Activated naive CD4-positive, alpha-beta T cell treated with anti-CD3 and anti-CD28 coated beads for 36 hours (primary cell): ENCODE measurements at regions of chr1 and their contacts with region 1.

Region 1: GRCh38 chr1:172745014-172745413 is 86.1 kb downstream of the FASLG start:
- DNase-seq: peak; percentile 64
- H3K4me3 Mint-ChIP-seq: no peak overlapping the region
- H3K27ac Mint-ChIP-seq: no peak overlapping the region
- H3K4me1 Mint-ChIP-seq: peaks cover 38% of the 10 kb centered on the region
- H3K27me3 Mint-ChIP-seq: no peaks in the 10 kb centered on the region

Region 2: DNA sequence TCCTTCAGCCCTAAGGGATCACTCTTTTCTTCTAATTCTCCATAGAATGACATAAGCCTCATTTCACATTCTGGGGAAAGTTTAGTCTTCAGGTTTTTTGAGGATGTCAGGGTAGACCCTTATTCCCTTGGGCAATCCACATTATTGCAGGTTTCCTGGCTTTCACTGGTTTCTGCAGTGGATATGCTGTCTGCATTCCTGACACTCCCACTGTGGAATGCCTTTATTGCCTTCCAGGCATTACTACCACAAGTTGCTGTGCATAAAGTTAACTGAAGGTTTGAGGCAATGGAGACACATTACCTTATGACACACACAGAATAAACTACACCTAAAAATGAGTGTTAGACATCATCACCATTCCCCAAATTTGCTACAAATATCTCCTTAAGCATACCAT is 73.4 kb before region 1 on chr1:
- CTCF ChIA-PET with region 1: no interaction called
- intact Hi-C with region 1: no loop called
- DNase-seq: no peak
- H3K4me3 Mint-ChIP-seq: no peak overlapping the region
- H3K27ac Mint-ChIP-seq: no peak overlapping the region
- H3K4me1 Mint-ChIP-seq: peaks cover 70% of the 10 kb centered on the region
- H3K27me3 Mint-ChIP-seq: no peaks in the 10 kb centered on the region

Region 3: DNA sequence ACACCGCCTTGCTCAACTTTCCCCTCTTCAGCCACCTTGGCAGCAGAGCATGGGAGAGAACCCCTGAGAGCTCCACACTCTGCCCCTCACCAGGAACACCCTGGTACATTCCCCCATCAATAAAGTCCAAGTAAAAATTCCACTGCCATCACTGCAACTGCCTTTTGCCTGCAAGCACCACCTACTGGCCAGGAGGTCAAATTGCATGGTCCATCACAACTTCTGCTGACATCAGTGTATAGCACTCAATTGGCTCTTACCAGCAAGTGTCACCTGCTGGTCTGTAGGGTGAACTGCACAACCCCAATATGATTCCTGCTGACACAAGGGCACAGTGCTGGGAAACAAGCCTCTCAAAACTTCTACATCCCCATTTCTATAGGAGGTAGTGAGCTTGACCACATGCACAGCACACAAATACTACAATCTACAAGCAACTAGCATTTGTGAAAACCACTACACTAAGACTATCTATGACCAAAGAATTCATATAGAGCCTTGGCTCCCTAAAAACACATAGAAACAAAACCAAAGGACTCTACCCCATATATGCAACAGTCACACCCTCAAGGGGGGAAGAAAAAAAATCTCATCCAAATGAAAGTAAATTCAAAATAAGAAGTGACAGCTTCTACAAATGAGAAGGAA is 16.9 kb before region 1 on chr1:
- CTCF ChIA-PET with region 1: interaction called, 17 read pairs
- intact Hi-C with region 1: no loop called
- DNase-seq: peak; percentile 71
- H3K4me3 Mint-ChIP-seq: no peak overlapping the region
- H3K27ac Mint-ChIP-seq: no peak overlapping the region
- H3K4me1 Mint-ChIP-seq: peaks cover 17% of the 10 kb centered on the region
- H3K27me3 Mint-ChIP-seq: no peaks in the 10 kb centered on the region

Region 4: DNA sequence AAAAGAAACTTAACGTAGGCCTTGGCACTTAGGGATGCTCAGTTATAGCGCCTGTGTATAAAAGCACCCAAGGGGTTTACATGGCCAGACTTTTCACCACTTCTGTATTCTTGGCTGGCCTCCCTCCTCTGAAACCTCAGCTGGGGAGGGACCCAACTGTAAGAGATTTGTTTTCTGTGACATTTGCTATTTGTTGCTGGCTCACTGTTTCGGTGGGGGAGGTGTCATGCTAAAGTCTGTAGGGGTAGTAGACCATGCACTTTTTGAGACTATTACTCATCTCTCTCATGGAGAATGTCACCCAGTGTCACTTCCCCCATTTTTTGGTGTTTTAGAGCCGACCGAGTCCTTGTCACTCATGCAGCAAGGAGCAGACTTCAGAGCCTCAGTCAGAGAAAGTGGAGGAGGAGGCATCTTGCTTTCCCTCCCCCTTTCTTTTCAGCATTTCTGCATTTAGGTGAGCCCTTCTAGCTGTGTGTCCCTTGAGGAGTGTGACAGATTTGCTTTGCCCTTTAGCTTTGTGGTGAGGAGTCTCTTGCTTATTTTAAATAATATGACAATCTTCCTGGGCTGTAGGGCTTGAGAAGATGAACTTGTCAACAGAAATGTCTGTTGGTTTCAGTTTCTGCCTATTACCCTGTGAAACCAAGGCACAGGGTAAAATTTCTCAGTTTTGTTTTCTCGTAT is 74.0 kb after region 1 on chr1:
- CTCF ChIA-PET with region 1: interaction called, 23 read pairs
- intact Hi-C with region 1: loop called (anchors 1 kb)
- DNase-seq: peak; percentile 68
- H3K4me3 Mint-ChIP-seq: no peak overlapping the region
- H3K27ac Mint-ChIP-seq: no peak overlapping the region
- H3K4me1 Mint-ChIP-seq: peaks cover 25% of the 10 kb centered on the region
- H3K27me3 Mint-ChIP-seq: no peaks in the 10 kb centered on the region

Region 5: DNA sequence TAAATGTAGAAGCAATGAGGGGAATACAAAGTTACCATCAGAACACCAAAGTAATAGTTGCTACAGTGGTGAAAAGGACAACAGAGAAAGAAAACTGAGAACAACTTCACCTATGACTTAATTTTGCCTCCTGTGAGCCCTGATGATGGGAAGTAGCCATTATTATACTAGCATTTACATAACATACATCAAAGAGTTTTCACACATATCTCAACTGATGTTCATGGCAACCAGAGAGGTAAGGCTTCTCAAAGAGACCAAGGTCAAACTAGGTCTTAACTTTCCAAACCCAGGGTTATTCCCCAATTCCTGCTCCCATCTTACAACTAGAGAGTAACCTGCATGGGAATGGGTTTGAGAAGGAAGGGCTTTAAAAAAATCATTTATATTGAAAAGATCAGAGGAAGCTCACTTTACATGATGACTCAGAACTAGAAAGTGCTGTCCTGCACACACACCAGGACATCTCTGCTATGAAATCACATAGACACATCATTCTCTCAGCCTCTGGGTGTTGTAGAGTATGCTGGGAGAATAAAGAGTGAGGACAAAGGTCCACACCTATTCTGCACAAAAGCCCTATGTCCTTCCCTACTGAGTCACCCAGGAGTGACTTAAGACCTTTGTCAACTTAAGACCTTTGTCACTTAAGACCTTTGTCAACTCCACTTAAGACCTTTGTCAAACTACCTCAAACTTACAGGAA is 126.0 kb after region 1 on chr1:
- CTCF ChIA-PET with region 1: interaction called, 3 read pairs
- intact Hi-C with region 1: loop called (anchors 2 kb)
- DNase-seq: no peak
- H3K4me3 Mint-ChIP-seq: no peak overlapping the region
- H3K27ac Mint-ChIP-seq: no peak overlapping the region
- H3K4me1 Mint-ChIP-seq: peaks cover 32% of the 10 kb centered on the region
- H3K27me3 Mint-ChIP-seq: peaks cover 24% of the 10 kb centered on the region

Region 6: DNA sequence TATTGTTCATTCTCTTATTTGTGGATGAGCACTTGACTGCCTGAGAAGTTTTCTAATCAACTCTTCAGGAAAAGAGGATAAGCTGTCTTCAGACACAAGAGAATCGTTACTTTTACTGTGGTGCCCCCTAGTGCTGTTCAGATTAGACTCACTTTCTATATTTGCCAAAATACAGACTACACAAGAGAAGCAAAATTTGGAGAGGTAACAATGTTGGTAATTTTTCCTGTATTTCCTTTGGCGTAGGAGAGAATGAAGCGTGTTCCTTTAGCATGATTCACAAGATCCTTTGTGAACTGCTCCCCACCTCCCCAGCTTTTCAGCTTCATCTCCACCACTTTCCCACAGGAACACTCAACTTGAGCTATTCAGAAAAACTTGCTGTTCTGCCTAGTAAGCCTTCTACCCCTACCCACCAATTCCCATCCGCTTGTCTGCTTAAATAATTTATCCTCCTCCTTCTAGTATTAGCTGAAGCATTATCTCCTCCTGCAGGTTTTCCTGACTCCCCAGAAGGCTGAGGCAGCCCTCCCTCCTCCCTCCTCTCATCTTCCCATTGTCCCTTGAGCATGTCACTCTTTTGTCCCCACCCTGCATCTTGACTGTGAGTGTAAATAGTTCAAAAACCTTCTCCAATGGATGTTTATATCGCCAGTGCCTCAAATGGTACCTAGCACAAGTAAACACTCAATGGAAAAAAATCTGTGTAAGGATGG is 457.6 kb after region 1 on chr1:
- CTCF ChIA-PET with region 1: interaction called, 176 read pairs
- intact Hi-C with region 1: loop called (anchors 1 kb)
- DNase-seq: peak; percentile 39
- H3K4me3 Mint-ChIP-seq: no peak overlapping the region
- H3K27ac Mint-ChIP-seq: no peak overlapping the region
- H3K4me1 Mint-ChIP-seq: peaks cover 37% of the 10 kb centered on the region
- H3K27me3 Mint-ChIP-seq: peaks cover 4% of the 10 kb centered on the region

Region 7: GRCh38 chr1:173429471-173430402 is 684.7 kb after region 1 on chr1:
- CTCF ChIA-PET with region 1: interaction called, 3 read pairs
- intact Hi-C with region 1: loop called (anchors 1 kb)
- DNase-seq: peak; percentile 86
- H3K4me3 Mint-ChIP-seq: peak overlapping the region; percentile 42
- H3K27ac Mint-ChIP-seq: peak overlapping the region; percentile 43
- H3K4me1 Mint-ChIP-seq: peaks cover 16% of the 10 kb centered on the region
- H3K27me3 Mint-ChIP-seq: no peaks in the 10 kb centered on the region

Region 8: GRCh38 chr1:173986951-173987350 is 1241.9 kb after region 1 on chr1:
- CTCF ChIA-PET with region 1: no interaction called
- intact Hi-C with region 1: no loop called
- DNase-seq: no peak
- H3K4me3 Mint-ChIP-seq: no peak overlapping the region
- H3K27ac Mint-ChIP-seq: no peak overlapping the region
- H3K4me1 Mint-ChIP-seq: no peaks in the 10 kb centered on the region
- H3K27me3 Mint-ChIP-seq: no peaks in the 10 kb centered on the region

Region 9: DNA sequence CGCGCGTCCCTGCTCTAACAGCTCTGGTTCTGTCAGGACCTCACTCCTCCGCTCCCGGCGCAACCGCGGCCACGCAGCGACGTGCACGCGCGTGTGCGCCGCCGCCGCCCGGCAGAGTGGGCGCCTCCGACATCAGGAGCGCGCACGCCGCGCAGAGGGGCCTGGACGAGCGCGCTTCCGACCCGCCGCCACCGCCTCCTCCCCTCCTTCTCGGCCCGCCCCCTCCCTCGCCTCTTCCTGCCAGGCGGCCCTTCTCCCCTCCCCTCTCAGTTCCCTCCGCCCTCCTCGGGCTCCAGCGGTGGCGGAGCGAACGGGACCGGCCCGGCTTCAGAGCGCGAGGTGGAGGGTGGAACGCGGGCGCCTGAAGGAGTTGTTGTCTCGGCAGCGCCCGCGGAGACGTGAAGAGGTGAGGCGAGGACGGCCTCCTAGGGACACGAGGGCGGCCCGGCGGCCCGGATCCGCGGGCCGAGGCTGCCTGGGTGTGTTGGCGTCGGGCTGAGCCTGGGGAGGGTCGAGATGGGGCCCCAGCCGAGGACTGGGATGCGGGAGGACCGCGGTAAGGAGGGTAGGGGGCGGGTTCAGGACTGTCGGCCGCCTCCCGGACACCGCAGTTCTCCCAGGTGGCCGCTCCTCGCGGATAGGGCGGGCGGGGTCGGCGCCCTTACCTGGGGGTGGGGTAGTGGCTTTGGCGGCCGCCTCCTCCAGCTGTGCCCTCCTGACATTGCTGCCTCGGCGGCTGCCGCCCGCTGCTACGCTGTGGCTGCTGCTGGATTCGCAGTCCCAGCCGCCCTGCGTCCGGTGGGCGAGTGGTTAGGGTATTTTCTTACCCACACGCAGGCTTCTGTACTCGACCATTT is 1414.5 kb after region 1 on chr1 and contains the start of gene RABGAP1L:
- CTCF ChIA-PET with region 1: no interaction called
- intact Hi-C with region 1: loop called (anchors 5 kb)
- DNase-seq: peak; percentile 94
- H3K4me3 Mint-ChIP-seq: peak within 1 kb of the TSS; percentile 83
- H3K27ac Mint-ChIP-seq: peak within 1 kb of the TSS; percentile 93
- H3K4me1 Mint-ChIP-seq: peaks cover 56% of the 10 kb centered on the region
- H3K27me3 Mint-ChIP-seq: no peaks in the 10 kb centered on the region
- total RNA-seq, gene RABGAP1L: 16.6 TPM